ENCODE measurements at regions of chr18 and their contacts with region 1.

Region 1: DNA sequence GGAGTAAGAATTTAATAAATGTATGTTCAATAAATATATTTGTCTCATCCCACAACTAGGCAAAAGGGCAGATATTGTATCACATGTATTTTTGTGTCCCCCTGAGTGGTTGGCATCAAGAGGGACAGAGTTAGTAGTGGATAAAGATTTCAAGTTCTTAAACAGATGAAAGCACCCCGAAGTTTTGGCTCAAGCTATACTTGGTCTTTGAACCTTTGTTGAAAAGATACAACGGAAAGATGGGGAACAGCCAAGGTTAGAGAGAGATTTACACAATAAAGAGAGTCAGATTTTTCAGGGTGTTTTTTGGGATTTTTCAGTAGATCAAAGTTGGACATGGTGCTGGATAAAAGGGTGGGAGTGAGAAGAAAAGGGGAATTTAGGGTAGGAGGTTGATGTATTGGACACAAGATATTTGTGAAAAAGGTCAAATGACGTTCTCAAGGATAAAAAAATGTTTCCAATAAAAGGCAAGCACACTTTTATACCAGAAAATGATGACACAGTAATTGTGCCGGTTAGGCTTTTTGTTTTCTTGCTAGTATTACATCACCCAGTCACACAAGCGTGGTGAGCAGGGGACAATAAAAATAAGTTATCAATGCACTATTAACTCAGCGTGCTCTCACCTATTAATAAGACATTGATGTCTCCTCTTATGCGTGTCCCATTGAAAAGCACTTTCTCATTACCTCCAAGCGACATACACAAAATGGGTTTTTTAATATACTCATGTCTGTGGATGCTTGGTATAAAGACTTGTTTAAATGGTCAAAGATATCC is 59.5 kb downstream of the MEP1B start:
- DNase-seq: no peak
- H3K4me3 ChIP-seq: no peak overlapping the region
- H3K27ac ChIP-seq: no peak overlapping the region
- H3K4me1 ChIP-seq: peaks cover 0 to 7% (median 0%) of the 10 kb centered on the region in 4 experiments; a peak in 2 of 7 replicates
- H3K27me3 ChIP-seq: no peaks in the 10 kb centered on the region
- CTCF ChIP-seq: no peak
- EP300 ChIP-seq: no peak
- POLR2A ChIP-seq: no peak
- RAD21 ChIP-seq: no peak

Region 2: GRCh38 chr18:32010124-32010738 is 239.1 kb before region 1 on chr18:
- CTCF ChIA-PET with region 1: no interaction called
- POLR2A ChIA-PET with region 1: no interaction called
- DNase-seq: peak in 1 of 2 experiments; percentile 5
- H3K4me3 ChIP-seq: no peak overlapping the region
- H3K27ac ChIP-seq: no peak overlapping the region
- H3K4me1 ChIP-seq: peaks cover 0 to 10% (median 1%) of the 10 kb centered on the region in 4 experiments; a peak in 3 of 7 replicates
- H3K27me3 ChIP-seq: no peaks in the 10 kb centered on the region
- CTCF ChIP-seq: no peak
- EP300 ChIP-seq: no peak
- POLR2A ChIP-seq: no peak
- RAD21 ChIP-seq: no peak

Region 3: GRCh38 chr18:32238635-32239268 is 10.6 kb before region 1 on chr18:
- CTCF ChIA-PET with region 1: interaction called, 13 read pairs
- POLR2A ChIA-PET with region 1: no interaction called
- DNase-seq: no peak
- H3K4me3 ChIP-seq: no peak overlapping the region
- H3K27ac ChIP-seq: no peak overlapping the region
- H3K4me1 ChIP-seq: peaks cover 2 to 12% (median 4%) of the 10 kb centered on the region in 4 experiments; a peak in 3 of 7 replicates
- H3K27me3 ChIP-seq: no peaks in the 10 kb centered on the region
- CTCF ChIP-seq: peak; percentile 10 to 50 (median 43); a peak in 3 of 4 replicates
- EP300 ChIP-seq: no peak
- POLR2A ChIP-seq: no peak
- RAD21 ChIP-seq: peak; percentile 21 to 51; a peak in 3 of 4 replicates

Measured in H1 (cell line).